Naive thymus-derived CD4-positive, alpha-beta T cell (primary cell): ENCODE measurements at regions of chr6 and their contacts with region 1.

Region 1: DNA sequence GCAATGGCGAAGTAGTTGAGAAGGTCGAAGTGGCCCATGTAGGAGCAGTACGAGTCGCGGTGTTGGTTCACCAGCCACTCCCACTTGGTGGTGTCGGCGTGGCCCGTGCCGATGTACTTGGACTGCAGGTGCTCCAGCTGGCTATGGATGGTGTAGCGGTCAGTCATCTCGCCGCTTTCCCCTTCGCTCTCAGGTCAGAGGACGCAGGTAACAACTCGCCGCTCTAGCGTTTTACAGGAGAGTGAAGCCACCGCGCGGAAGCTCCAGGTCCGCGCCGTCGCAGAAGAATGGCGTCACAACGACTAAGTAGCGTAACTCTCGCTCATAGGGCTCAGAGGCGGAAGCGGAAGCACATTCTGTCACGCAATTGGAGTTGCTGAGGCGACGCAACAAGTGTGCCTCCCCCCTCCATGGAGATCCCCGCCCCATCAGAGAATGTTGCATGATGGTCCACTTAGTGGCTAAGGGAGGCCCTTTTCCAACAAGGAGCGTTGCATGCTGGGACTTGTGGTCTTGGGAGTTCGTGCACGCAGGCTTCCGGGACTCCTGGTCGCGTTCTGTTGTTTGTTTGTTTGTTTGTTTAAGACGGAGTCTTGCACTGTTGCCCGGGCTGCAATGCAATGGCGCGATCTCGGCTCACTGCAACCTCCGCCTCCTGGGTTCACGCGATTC is at the start of gene SF3B5:
- DNase-seq: peak; percentile 86 to 99 (median 97)
- ATAC-seq: peak; percentile 98
- H3K4me3 ChIP-seq: peak within 1 kb of the TSS; percentile 98
- H3K4me3 Mint-ChIP-seq: peak within 1 kb of the TSS; percentile 93 to 100 (median 98)
- H3K27ac ChIP-seq: peak within 1 kb of the TSS; percentile 92
- H3K27ac Mint-ChIP-seq: peak within 1 kb of the TSS; percentile 96 to 100 (median 98)
- H3K4me1 ChIP-seq: peaks cover 13 to 14% of the 10 kb centered on the region in 2 donors
- H3K4me1 Mint-ChIP-seq: peaks cover 15 to 38% (median 32%) of the 10 kb centered on the region in 7 donors
- H3K27me3 ChIP-seq: no peaks in the 10 kb centered on the region
- H3K27me3 Mint-ChIP-seq: peaks cover 0 to 10% (median 0%) of the 10 kb centered on the region in 5 donors
- total RNA-seq, gene SF3B5: 89.2 to 155 (median 122) TPM

Region 2: GRCh38 chr6:142146828-142147662 is 1948.4 kb before region 1 on chr6 and contains the starts of genes NMBR and VTA1:
- CTCF ChIA-PET with region 1: no interaction called
- POLR2A ChIA-PET with region 1: no interaction called
- intact Hi-C with region 1: loop called in 1 of 2 experiments (anchors 1 kb)
- DNase-seq: peak; percentile 81 to 98 (median 97)
- ATAC-seq: peak; percentile 99
- H3K4me3 ChIP-seq: peak within 1 kb of the TSS; percentile 95
- H3K4me3 Mint-ChIP-seq: peak within 1 kb of the TSS; percentile 88 to 98 (median 95)
- H3K27ac ChIP-seq: peak within 1 kb of the TSS; percentile 75
- H3K27ac Mint-ChIP-seq: peak within 1 kb of the TSS; percentile 80 to 98 (median 94)
- H3K4me1 ChIP-seq: peaks cover 22 to 25% of the 10 kb centered on the region in 2 donors
- H3K4me1 Mint-ChIP-seq: peaks cover 36 to 73% (median 65%) of the 10 kb centered on the region in 7 donors
- H3K27me3 ChIP-seq: no peaks in the 10 kb centered on the region
- H3K27me3 Mint-ChIP-seq: peaks cover 0 to 2% (median 0%) of the 10 kb centered on the region in 5 donors
- total RNA-seq, gene NMBR: not detected
- total RNA-seq, gene VTA1: 13.6 to 41.3 (median 32.6) TPM

Region 3: DNA sequence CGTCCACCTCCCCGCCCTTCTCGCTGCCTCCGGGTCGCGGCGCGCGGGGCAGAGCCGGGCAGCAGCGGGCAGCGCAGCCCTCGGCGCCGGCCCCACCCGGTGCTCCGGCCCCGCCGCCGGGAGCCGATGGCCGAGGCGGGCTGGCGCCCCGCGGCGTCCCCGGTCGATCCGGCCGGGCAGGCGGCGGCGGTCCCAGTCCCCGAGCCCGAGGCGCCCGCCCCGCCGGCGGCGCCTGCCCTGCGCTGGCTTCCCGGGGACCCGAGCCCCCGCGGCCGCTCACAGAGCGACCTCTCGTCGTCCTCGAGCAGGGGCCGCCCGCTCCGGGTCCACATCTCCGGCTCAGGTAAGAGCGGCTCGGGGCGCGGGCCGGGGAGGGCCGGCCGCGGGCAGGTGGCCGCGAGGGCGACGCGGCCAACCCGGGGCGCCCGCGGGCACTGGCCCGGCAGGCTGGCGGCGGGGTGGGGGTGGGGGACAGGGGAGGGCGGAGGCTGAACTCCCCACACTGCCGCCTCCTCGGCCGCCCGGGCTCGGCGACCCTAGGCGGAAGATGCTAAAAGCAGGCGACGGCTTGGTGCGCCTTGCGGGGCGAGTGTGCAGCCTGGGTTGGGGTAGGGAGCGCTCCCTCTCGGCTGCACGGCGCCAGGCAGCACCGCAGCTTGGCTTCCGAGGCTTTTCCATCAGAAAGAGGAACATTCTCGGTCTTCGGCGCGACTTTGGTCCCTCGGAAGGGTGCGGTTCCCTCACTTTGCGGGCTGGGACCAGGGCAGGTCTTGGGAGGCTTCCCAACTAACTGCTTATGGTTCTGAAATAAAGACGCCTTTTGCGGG is 558.4 kb before region 1 on chr6:
- CTCF ChIA-PET with region 1: no interaction called
- POLR2A ChIA-PET with region 1: no interaction called
- intact Hi-C with region 1: loop called in 1 of 2 experiments (anchors 1 kb)
- DNase-seq: peak; percentile 37 to 69 (median 57)
- ATAC-seq: peak; percentile 83
- H3K4me3 ChIP-seq: peak overlapping the region; percentile 74
- H3K4me3 Mint-ChIP-seq: peak overlapping the region; percentile 81 to 92 (median 84)
- H3K27ac ChIP-seq: peak overlapping the region; percentile 60
- H3K27ac Mint-ChIP-seq: peak overlapping the region in 7 of 9 donors; percentile 59 to 89 (median 76)
- H3K4me1 ChIP-seq: peaks cover 27 to 28% of the 10 kb centered on the region in 2 donors
- H3K4me1 Mint-ChIP-seq: peaks cover 17 to 47% (median 37%) of the 10 kb centered on the region in 7 donors
- H3K27me3 ChIP-seq: no peaks in the 10 kb centered on the region
- H3K27me3 Mint-ChIP-seq: no peaks in the 10 kb centered on the region

Region 4: GRCh38 chr6:143940011-143940597 is 155.4 kb before region 1 on chr6:
- CTCF ChIA-PET with region 1: no interaction called
- POLR2A ChIA-PET with region 1: interaction called, 3 read pairs
- intact Hi-C with region 1: loop called (anchors 1 kb)
- DNase-seq: peak in 7 of 9 donors; percentile 44 to 69 (median 54)
- ATAC-seq: peak; percentile 96
- H3K4me3 ChIP-seq: no peak overlapping the region
- H3K4me3 Mint-ChIP-seq: no peak overlapping the region
- H3K27ac ChIP-seq: no peak overlapping the region
- H3K27ac Mint-ChIP-seq: no peak overlapping the region
- H3K4me1 ChIP-seq: no peaks in the 10 kb centered on the region
- H3K4me1 Mint-ChIP-seq: peaks cover 0 to 16% (median 6%) of the 10 kb centered on the region in 7 donors
- H3K27me3 ChIP-seq: no peaks in the 10 kb centered on the region
- H3K27me3 Mint-ChIP-seq: peaks cover 0 to 7% (median 0%) of the 10 kb centered on the region in 5 donors

Region 5: DNA sequence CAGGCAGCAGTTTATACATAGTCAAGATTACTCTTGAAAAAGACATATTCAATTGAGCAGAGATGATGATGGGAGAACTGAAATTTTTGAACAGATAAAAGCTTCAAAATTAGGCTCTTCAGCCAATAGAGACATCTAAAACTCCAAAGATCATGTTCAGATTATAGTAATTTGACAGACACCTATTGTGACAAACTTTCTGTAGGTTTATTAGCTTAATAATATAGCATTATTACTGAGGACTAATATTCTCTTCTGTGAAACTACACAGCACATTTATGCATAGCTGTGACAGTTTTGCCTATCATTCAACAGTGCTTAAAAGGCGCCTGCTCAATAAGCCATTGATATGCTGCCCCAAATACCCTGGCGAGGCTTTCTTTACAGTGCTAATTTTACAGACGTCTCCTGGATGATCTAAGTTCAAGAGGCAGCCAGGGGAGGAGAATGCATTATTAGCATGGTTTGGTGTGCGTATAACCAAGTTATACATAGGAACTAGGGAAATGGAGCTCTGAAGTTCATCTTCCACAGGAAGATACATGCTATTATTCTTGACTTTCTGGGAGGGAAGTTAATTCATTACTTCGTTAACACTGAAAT is 108.9 kb before region 1 on chr6:
- CTCF ChIA-PET with region 1: no interaction called
- POLR2A ChIA-PET with region 1: no interaction called
- intact Hi-C with region 1: no loop called
- DNase-seq: no peak
- ATAC-seq: no peak
- H3K4me3 ChIP-seq: no peak overlapping the region
- H3K4me3 Mint-ChIP-seq: no peak overlapping the region
- H3K27ac ChIP-seq: no peak overlapping the region
- H3K27ac Mint-ChIP-seq: no peak overlapping the region
- H3K4me1 ChIP-seq: no peaks in the 10 kb centered on the region
- H3K4me1 Mint-ChIP-seq: no peaks in the 10 kb centered on the region
- H3K27me3 ChIP-seq: no peaks in the 10 kb centered on the region
- H3K27me3 Mint-ChIP-seq: peaks cover 0 to 10% (median 4%) of the 10 kb centered on the region in 5 donors

Region 6: GRCh38 chr6:144063744-144064401 is 31.6 kb before region 1 on chr6:
- CTCF ChIA-PET with region 1: no interaction called
- POLR2A ChIA-PET with region 1: interaction called, 17 read pairs
- intact Hi-C with region 1: loop called (anchors 1 kb)
- DNase-seq: peak; percentile 84 to 91 (median 88)
- ATAC-seq: peak; percentile 96
- H3K4me3 ChIP-seq: peak overlapping the region; percentile 56
- H3K4me3 Mint-ChIP-seq: peak overlapping the region; percentile 87 to 94 (median 91)
- H3K27ac ChIP-seq: peak overlapping the region; percentile 85
- H3K27ac Mint-ChIP-seq: peak overlapping the region; percentile 83 to 97 (median 88)
- H3K4me1 ChIP-seq: peaks cover 0 to 12% of the 10 kb centered on the region in 2 donors
- H3K4me1 Mint-ChIP-seq: peaks cover 17 to 44% (median 29%) of the 10 kb centered on the region in 7 donors
- H3K27me3 ChIP-seq: no peaks in the 10 kb centered on the region
- H3K27me3 Mint-ChIP-seq: peaks cover 0 to 2% (median 0%) of the 10 kb centered on the region in 5 donors

Region 7: DNA sequence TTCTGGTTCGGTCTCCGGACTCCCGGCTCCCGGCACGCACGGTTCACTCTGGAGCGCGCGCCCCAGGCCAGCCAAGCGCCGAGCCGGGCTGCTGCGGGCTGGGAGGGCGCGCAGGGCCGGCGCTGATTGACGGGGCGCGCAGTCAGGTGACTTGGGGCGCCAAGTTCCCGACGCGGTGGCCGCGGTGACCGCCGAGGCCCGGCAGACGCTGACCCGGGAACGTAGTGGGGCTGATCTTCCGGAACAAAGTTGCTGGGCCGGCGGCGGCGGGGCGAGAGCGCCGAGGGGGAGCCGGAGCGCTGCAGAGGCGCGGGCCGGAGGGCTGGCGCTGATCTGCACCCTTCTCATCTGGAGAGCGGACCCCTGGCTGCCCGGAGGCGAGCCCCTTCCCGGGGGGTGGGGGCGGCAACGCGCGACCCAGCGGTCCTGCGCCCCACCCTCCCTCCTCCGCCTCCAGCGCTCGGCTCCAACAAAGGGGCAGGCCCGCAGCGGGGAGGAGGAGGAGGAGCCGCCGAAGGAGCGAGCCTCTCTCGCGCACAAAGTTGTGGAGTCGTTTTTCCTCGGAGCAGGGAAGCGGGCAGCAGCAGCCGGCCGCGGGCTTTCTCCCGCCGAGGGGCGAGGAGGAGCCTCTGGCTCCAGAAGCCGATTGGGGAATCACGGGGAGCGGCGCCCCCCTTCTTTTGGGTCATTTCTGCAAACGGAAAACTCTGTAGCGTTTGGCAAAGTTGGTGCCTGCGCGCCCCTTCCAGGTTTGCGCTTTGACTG is 189.5 kb after region 1 on chr6 and contains the start of gene UTRN:
- CTCF ChIA-PET with region 1: no interaction called
- POLR2A ChIA-PET with region 1: interaction called, 3 read pairs
- intact Hi-C with region 1: loop called in 1 of 2 experiments (anchors 1 kb)
- DNase-seq: peak; percentile 7 to 62 (median 30)
- ATAC-seq: peak; percentile 66
- H3K4me3 ChIP-seq: peak within 1 kb of the TSS; percentile 85
- H3K4me3 Mint-ChIP-seq: peak within 1 kb of the TSS; percentile 76 to 96 (median 92)
- H3K27ac ChIP-seq: no peak within 1 kb of the TSS
- H3K27ac Mint-ChIP-seq: peak within 1 kb of the TSS in 7 of 9 donors; percentile 22 to 82 (median 60)
- H3K4me1 ChIP-seq: peaks cover 10 to 14% of the 10 kb centered on the region in 2 donors
- H3K4me1 Mint-ChIP-seq: peaks cover 12 to 25% (median 15%) of the 10 kb centered on the region in 7 donors
- H3K27me3 ChIP-seq: no peaks in the 10 kb centered on the region
- H3K27me3 Mint-ChIP-seq: peaks cover 6 to 47% (median 18%) of the 10 kb centered on the region in 5 donors
- total RNA-seq, gene UTRN: 148 to 280 (median 153) TPM

Region 8: DNA sequence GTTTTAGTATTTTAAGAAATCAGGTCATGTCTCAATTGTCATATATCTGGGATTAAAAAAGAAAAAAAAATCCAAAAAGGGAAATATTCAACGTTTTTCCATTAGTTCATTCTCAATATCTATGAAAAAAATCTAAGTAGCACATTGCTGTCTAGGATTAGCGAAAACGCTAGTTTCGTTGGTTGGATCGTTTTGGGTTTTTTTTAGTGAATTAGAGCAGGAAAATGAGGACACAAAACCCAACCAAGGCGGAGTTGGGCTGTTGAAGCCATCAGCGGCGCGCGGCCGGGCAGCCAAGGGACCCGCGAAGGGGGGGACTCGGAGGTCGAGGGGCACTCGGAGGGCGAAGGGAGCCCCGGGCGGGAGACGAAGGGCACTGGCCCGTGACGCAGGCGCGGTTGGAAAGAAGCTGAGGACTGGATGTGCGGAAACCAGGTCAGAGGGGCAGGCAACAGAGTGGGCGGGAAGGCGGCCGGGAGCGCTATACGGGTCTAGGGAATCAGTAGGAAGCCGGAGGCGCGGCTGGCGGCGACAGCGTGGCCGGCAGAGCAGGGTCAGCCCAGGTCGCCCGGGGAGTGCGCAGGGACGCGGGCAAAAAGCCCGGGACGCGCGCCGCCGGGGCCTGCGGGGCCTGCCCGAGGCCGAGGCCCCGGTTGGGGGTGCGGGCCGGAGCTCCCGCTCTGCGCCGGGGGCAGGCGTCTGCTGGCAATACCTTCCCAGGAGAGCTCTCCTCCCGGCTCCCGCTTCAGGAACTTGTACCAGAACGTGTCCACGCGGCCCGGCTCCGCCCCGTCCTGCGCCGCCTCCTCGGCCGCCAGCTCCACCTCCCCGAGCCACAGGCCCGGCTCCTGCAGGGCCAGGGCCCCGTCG is 1639.3 kb after region 1 on chr6:
- CTCF ChIA-PET with region 1: no interaction called
- POLR2A ChIA-PET with region 1: no interaction called
- intact Hi-C with region 1: loop called in 1 of 2 experiments (anchors 1 kb)
- DNase-seq: peak; percentile 50 to 78 (median 64)
- ATAC-seq: peak; percentile 79
- H3K4me3 ChIP-seq: peak overlapping the region; percentile 65
- H3K4me3 Mint-ChIP-seq: peak overlapping the region; percentile 87 to 100 (median 98)
- H3K27ac ChIP-seq: peak overlapping the region; percentile 92
- H3K27ac Mint-ChIP-seq: peak overlapping the region; percentile 90 to 99 (median 97)
- H3K4me1 ChIP-seq: peaks cover 0 to 5% of the 10 kb centered on the region in 2 donors
- H3K4me1 Mint-ChIP-seq: peaks cover 0 to 29% (median 9%) of the 10 kb centered on the region in 7 donors
- H3K27me3 ChIP-seq: no peaks in the 10 kb centered on the region
- H3K27me3 Mint-ChIP-seq: no peaks in the 10 kb centered on the region